ENCODE measurements at regions of chr6 and their contacts with region 1.

Region 1: DNA sequence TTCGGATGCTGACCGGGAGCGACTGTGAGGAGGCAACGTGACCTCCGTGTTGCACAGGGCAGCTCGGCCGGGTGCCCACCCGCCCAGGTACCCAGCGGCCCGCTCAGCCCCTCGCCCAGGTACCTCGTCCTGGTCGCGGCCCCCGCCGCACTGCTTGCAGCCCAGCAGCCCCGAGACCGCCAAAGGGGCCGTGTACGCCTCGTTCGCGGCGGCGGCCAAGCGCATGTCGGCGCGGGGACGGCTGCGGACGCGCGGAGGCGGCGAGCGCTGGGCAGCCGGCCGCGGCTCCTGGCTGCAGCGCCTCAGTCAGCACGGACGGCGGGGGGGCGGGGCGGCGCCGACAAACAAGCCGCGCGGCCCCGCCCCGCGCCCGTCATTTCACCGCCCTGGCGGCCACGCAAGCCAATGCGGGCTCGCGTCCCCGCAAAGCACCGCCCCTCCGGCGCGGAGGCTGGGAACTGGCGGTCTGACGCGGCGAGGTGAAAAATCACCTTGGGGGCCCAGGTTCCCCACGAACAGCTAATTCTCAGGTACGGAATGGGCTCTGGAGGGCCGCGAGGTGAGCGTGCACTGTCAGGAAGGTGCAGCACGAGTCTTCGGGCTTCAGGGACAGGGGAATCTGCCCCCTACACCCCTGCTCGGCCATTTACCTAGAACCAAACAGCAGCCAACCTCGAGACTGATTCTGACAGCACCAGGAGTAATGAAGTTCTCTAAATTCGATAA is 85.2 kb downstream of the SESN1 start:
- DNase-seq: peak; percentile 90 to 92 (median 90)
- H3K4me3 ChIP-seq: peak overlapping the region; percentile 77 to 86
- H3K4me3 Mint-ChIP-seq: peak overlapping the region; percentile 94 to 100 (median 98)
- H3K27ac ChIP-seq: peak overlapping the region; percentile 96
- H3K27ac Mint-ChIP-seq: peak overlapping the region; percentile 94 to 100 (median 100)
- H3K4me1 ChIP-seq: peaks cover 67% of the 10 kb centered on the region
- H3K4me1 Mint-ChIP-seq: peaks cover 47 to 81% (median 60%) of the 10 kb centered on the region in 4 donors
- H3K27me3 ChIP-seq: no peaks in the 10 kb centered on the region
- H3K27me3 Mint-ChIP-seq: no peaks in the 10 kb centered on the region

Region 2: GRCh38 chr6:108764580-108764950 is 244.8 kb before region 1 on chr6:
- CTCF ChIA-PET with region 1: no interaction called
- POLR2A ChIA-PET with region 1: no interaction called
- intact Hi-C with region 1: no loop called
- DNase-seq: no peak
- H3K4me3 ChIP-seq: no peak overlapping the region
- H3K4me3 Mint-ChIP-seq: no peak overlapping the region
- H3K27ac ChIP-seq: no peak overlapping the region
- H3K27ac Mint-ChIP-seq: no peak overlapping the region
- H3K4me1 ChIP-seq: no peaks in the 10 kb centered on the region
- H3K4me1 Mint-ChIP-seq: peaks cover 0 to 6% (median 0%) of the 10 kb centered on the region in 4 donors
- H3K27me3 ChIP-seq: no peaks in the 10 kb centered on the region
- H3K27me3 Mint-ChIP-seq: peaks cover 3 to 5% of the 10 kb centered on the region in 2 donors

Region 3: GRCh38 chr6:108848116-108848868 is 161.1 kb before region 1 on chr6 and contains the start of gene ARMC2:
- CTCF ChIA-PET with region 1: no interaction called
- POLR2A ChIA-PET with region 1: interaction called, 11 read pairs
- intact Hi-C with region 1: loop called (anchors 1 kb)
- DNase-seq: peak; percentile 85 to 88 (median 86)
- H3K4me3 ChIP-seq: peak within 1 kb of the TSS; percentile 46 to 78
- H3K4me3 Mint-ChIP-seq: peak within 1 kb of the TSS; percentile 84 to 91 (median 86)
- H3K27ac ChIP-seq: peak within 1 kb of the TSS; percentile 58
- H3K27ac Mint-ChIP-seq: peak within 1 kb of the TSS; percentile 81 to 93 (median 91)
- H3K4me1 ChIP-seq: peaks cover 15% of the 10 kb centered on the region
- H3K4me1 Mint-ChIP-seq: peaks cover 17 to 33% (median 23%) of the 10 kb centered on the region in 4 donors
- H3K27me3 ChIP-seq: no peaks in the 10 kb centered on the region
- H3K27me3 Mint-ChIP-seq: no peaks in the 10 kb centered on the region
- total RNA-seq, gene ARMC2: 10.7 to 11.2 TPM

Region 4: GRCh38 chr6:108944707-108945680 is 64.4 kb before region 1 on chr6:
- CTCF ChIA-PET with region 1: no interaction called
- POLR2A ChIA-PET with region 1: interaction called, 11 read pairs
- intact Hi-C with region 1: loop called (anchors 2 kb)
- DNase-seq: no peak
- H3K4me3 ChIP-seq: no peak overlapping the region
- H3K4me3 Mint-ChIP-seq: peak overlapping the region in 3 of 8 donors; percentile 3 to 40 (median 15)
- H3K27ac ChIP-seq: no peak overlapping the region
- H3K27ac Mint-ChIP-seq: peak overlapping the region in 5 of 7 donors; percentile 3 to 24 (median 7)
- H3K4me1 ChIP-seq: peaks cover 37% of the 10 kb centered on the region
- H3K4me1 Mint-ChIP-seq: peaks cover 22 to 66% (median 38%) of the 10 kb centered on the region in 4 donors
- H3K27me3 ChIP-seq: no peaks in the 10 kb centered on the region
- H3K27me3 Mint-ChIP-seq: no peaks in the 10 kb centered on the region

Region 5: GRCh38 chr6:109036574-109037294 is 27.3 kb after region 1 on chr6:
- CTCF ChIA-PET with region 1: interaction called, 5 read pairs
- POLR2A ChIA-PET with region 1: interaction called, 59 read pairs
- intact Hi-C with region 1: no loop called
- DNase-seq: peak in 4 of 5 donors; percentile 21 to 38 (median 34)
- H3K4me3 ChIP-seq: no peak overlapping the region
- H3K4me3 Mint-ChIP-seq: peak overlapping the region in 7 of 8 donors; percentile 2 to 72 (median 55)
- H3K27ac ChIP-seq: no peak overlapping the region
- H3K27ac Mint-ChIP-seq: peak overlapping the region; percentile 19 to 90 (median 74)
- H3K4me1 ChIP-seq: peaks cover 30% of the 10 kb centered on the region
- H3K4me1 Mint-ChIP-seq: peaks cover 31 to 69% (median 42%) of the 10 kb centered on the region in 4 donors
- H3K27me3 ChIP-seq: no peaks in the 10 kb centered on the region
- H3K27me3 Mint-ChIP-seq: no peaks in the 10 kb centered on the region

Region 6: DNA sequence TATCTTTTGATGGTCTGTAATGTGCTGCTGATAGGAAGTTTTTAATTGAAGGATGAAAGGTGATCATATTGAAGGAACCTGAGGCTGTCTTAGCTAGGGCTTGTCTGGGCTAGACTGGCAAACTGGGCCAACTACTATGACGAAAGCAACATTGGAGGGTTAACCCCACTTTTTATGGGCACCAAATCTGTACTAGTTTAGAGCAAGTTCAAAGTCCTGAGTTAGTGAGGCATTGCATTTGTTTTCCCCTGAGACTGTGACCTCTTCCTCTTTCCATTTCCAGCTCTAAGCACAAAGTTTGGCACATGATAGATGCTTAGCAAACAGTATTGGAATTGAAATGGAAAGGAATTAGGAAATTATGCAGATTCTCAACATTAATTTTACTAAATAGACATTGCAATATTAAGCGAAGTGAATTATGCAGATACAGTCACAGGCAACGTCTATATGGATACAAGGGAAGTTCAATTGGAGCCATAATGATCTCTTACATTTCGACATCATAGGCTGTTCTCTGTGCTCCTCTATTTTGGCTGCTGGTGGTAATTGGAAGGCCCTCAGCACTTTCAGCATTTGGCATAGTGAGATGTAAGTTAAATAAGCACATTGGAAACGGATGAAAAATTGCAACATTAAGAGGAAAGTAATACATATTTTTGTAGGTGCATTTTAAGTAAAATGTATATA is 108.1 kb after region 1 on chr6:
- CTCF ChIA-PET with region 1: no interaction called
- POLR2A ChIA-PET with region 1: no interaction called
- intact Hi-C with region 1: no loop called
- DNase-seq: no peak
- H3K4me3 ChIP-seq: no peak overlapping the region
- H3K4me3 Mint-ChIP-seq: no peak overlapping the region
- H3K27ac ChIP-seq: no peak overlapping the region
- H3K27ac Mint-ChIP-seq: peak overlapping the region in 1 of 7 donors; percentile 21
- H3K4me1 ChIP-seq: peaks cover 13% of the 10 kb centered on the region
- H3K4me1 Mint-ChIP-seq: peaks cover 11 to 21% (median 17%) of the 10 kb centered on the region in 4 donors
- H3K27me3 ChIP-seq: no peaks in the 10 kb centered on the region
- H3K27me3 Mint-ChIP-seq: no peaks in the 10 kb centered on the region